Body of pancreas (tissue), 4 donors: ENCODE measurements at regions of chr4 and their contacts with region 1.

Region 1: DNA sequence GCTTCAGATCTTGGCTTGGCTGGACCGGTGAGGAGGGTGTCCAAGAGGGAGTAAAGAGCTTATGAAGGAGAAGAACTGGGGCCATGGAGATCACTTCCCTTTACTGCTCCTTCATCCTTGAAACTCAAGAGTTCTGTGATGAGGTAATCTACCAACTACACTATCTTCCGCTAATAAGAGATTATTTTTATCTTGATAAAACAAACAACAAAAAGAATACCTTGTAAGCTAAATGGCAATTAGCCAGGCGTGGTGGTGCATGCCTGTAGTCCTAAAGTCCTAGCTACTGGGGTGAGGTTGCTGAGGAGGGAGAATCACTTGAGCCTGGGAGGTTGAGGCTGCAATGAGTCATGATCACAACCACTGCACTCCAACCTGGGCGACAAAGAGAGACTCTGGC is 47.4 kb downstream of the HAUS3 start:
- DNase-seq: no peak
- ATAC-seq: no peak
- H3K4me3 ChIP-seq: no peak overlapping the region
- H3K27ac ChIP-seq: no peak overlapping the region
- H3K4me1 ChIP-seq: no peaks in the 10 kb centered on the region
- H3K27me3 ChIP-seq: no peaks in the 10 kb centered on the region
- CTCF ChIP-seq: no peak
- POLR2A ChIP-seq: no peak

Region 2: DNA sequence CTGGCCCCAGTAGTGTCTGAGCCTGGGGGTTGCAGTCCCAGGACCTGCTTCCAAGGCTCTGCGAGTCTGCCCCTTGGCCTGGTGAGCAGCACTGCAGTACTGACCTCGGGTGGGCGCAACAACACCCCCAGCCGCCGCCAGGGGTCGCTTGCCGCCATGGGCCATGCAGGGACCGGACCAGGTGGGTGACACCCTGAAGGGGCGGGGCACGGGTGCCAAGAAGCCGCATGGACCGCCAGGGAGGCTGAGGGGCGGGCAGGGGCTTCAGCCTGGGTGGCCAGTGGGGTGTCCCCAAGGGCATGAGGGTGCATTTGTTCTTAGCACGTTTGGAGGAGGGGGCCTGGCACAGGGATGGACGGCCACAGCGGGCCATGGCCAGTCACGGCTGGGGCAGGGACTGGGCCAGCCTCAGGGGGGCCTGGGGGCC is 448.2 kb before region 1 on chr4:
- intact Hi-C with region 1: loop called (anchors 10 kb)
- DNase-seq: peak; percentile 70 to 83 (median 76)
- ATAC-seq: peak; percentile 61
- H3K4me3 ChIP-seq: no peak overlapping the region
- H3K27ac ChIP-seq: peak overlapping the region in 3 of 4 donors; percentile 62 to 78 (median 71)
- H3K4me1 ChIP-seq: peaks cover 19% of the 10 kb centered on the region
- H3K27me3 ChIP-seq: no peaks in the 10 kb centered on the region
- CTCF ChIP-seq: peak; percentile 65 to 89 (median 73)
- POLR2A ChIP-seq: no peak